AG04450 (cell line): ENCODE measurements at regions of chr6 and their contacts with region 1.

Region 1: DNA sequence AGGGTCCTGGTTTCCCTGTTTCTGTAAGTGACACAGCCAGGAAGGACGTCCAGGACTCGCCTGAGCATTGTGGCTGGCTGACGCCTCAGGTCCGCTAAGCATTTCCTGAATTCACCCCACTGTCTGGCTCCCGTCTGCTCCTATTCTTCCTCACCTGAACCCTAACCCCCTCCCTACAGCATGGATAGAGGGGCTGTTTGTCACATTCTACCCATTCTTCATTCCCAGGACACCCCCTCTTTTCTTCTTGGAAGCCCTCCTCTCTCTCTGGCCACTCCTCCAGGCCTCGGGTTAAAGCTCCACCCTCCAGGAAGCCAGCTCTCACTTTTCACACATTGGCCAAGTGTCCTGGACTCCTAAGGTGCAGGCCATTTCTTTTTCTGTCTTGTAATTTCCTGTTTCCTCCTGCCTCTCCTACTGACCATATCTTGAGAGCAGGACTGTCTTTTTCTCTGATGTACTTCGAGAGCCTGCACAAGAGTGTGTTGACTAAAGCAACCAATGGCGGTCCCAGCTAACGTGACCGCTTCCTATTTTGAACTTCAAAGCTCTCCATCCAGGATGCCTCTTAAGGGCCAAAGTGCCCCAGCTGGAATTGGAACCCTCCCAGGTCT is 24.2 kb upstream of the MYMX start:
- DNase-seq: no peak
- H3K4me3 ChIP-seq: no peak overlapping the region
- H3K27ac ChIP-seq: no peak overlapping the region
- H3K27me3 ChIP-seq: peaks cover 9% of the 10 kb centered on the region
- CTCF ChIP-seq: no peak

Region 2: GRCh38 chr6:44172731-44173500 is 19.6 kb before region 1 on chr6:
- CTCF ChIA-PET with region 1: interaction called, 10 read pairs
- POLR2A ChIA-PET with region 1: no interaction called
- DNase-seq: peak; percentile 27
- H3K4me3 ChIP-seq: no peak overlapping the region
- H3K27ac ChIP-seq: no peak overlapping the region
- H3K27me3 ChIP-seq: peaks cover 19% of the 10 kb centered on the region
- CTCF ChIP-seq: peak; percentile 89

Region 3: GRCh38 chr6:44554861-44555260 is 362.3 kb after region 1 on chr6:
- CTCF ChIA-PET with region 1: no interaction called
- POLR2A ChIA-PET with region 1: no interaction called
- DNase-seq: no peak
- H3K4me3 ChIP-seq: no peak overlapping the region
- H3K27ac ChIP-seq: no peak overlapping the region
- H3K27me3 ChIP-seq: peaks cover 41% of the 10 kb centered on the region
- CTCF ChIP-seq: no peak